ENCODE measurements at regions of chr2 and their contacts with region 1.

Region 1: DNA sequence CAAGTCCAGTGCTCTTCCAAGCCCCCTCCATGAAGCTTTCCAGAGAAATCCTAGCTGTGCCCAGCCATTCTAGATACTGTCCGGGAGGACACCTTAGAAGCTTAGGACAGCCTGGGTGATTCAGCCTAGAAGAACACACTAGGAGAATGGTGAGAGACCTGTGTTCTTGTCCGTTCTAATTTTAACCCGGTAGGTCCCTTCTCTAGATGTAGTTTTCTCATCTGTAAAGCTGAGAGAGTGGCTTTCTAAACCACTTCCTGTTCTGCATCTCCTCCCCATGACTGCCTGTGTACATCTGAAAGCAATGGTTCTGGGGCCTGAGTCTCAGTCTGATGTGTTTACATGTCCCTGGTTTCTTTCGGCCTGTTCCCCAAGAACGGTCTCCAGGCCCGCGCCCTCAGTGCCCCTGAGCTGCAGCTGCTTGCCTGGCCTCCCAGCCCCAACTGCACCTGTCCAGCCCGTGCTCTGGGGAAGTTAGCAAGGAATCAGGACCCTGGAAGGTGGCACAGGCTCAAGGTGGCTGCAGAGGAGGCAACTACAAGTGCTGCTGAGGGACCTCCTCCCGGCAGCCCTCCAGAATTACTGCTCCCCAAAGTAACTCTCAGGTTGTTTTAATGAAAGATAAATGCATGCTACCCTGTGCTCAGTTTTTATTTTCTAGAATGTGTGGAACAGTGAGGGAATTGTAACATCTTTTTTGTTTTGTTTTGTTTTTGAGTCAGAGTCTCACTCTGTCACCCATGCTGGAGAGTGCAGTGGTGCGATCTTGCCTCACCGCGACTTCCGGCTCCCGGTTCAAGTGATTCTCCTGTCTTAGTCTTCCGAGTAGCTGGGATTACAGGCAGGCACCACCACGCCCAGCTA is 105.9 kb downstream of the LBH start:
- DNase-seq: peak; percentile 49
- ATAC-seq: peak; percentile 85
- H3K4me3 Mint-ChIP-seq: peak overlapping the region; percentile 76
- H3K27ac Mint-ChIP-seq: peak overlapping the region; percentile 98
- H3K4me1 Mint-ChIP-seq: peaks cover 95% of the 10 kb centered on the region
- H3K27me3 Mint-ChIP-seq: no peaks in the 10 kb centered on the region
- CTCF ChIP-seq: no peak

Region 2: GRCh38 chr2:30208452-30208851 is 128.8 kb before region 1 on chr2:
- CTCF ChIA-PET with region 1: interaction called, 36 read pairs
- POLR2A ChIA-PET with region 1: interaction called, 4 read pairs
- intact Hi-C with region 1: loop called (anchors 1 kb)
- DNase-seq: no peak
- ATAC-seq: peak; percentile 62
- H3K4me3 Mint-ChIP-seq: no peak overlapping the region
- H3K27ac Mint-ChIP-seq: peak overlapping the region; percentile 20
- H3K4me1 Mint-ChIP-seq: peaks cover 18% of the 10 kb centered on the region
- H3K27me3 Mint-ChIP-seq: no peaks in the 10 kb centered on the region
- CTCF ChIP-seq: peak; percentile 82

Region 3: DNA sequence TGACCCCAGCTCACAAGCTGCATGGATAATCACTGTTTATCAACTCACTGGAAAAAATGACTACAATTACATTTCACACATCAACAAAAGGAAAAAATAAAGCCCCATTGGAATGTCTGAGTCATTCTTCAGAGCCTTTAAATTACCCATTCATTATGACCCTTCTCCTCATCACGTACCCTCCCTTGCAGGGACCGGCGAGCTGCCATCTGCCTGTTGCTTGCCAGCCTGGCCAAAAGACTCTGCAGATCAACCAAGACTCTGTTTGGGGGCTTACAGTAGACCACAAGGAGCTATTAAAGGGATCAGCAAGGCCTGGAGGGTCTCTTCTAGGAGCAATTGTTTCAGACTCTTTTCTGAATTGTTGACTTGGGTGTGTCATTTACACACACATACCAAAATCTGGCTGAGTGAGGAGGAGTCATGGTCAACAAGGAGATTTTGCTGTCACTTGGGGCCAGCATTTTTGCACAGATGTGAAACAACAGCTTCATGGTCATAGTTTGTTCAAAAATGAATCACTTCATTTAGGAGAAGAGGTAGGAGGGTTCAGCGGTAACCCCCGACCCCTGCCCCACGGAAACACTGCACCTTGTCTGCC is 63.8 kb before region 1 on chr2:
- CTCF ChIA-PET with region 1: interaction called, 6 read pairs
- POLR2A ChIA-PET with region 1: interaction called, 5 read pairs
- intact Hi-C with region 1: loop called (anchors 1 kb)
- DNase-seq: no peak
- ATAC-seq: no peak
- H3K4me3 Mint-ChIP-seq: no peak overlapping the region
- H3K27ac Mint-ChIP-seq: peak overlapping the region; percentile 72
- H3K4me1 Mint-ChIP-seq: peaks cover 93% of the 10 kb centered on the region
- H3K27me3 Mint-ChIP-seq: no peaks in the 10 kb centered on the region
- CTCF ChIP-seq: no peak

Region 4: GRCh38 chr2:30293303-30293921 is 43.8 kb before region 1 on chr2:
- CTCF ChIA-PET with region 1: interaction called, 13 read pairs
- POLR2A ChIA-PET with region 1: interaction called, 46 read pairs
- intact Hi-C with region 1: loop called (anchors 1 kb)
- DNase-seq: peak; percentile 42
- ATAC-seq: peak; percentile 81
- H3K4me3 Mint-ChIP-seq: peak overlapping the region; percentile 58
- H3K27ac Mint-ChIP-seq: peak overlapping the region; percentile 95
- H3K4me1 Mint-ChIP-seq: peaks cover 74% of the 10 kb centered on the region
- H3K27me3 Mint-ChIP-seq: no peaks in the 10 kb centered on the region
- CTCF ChIP-seq: no peak

Region 5: GRCh38 chr2:30385327-30385726 is 48.1 kb after region 1 on chr2:
- CTCF ChIA-PET with region 1: no interaction called
- POLR2A ChIA-PET with region 1: no interaction called
- intact Hi-C with region 1: no loop called
- DNase-seq: no peak
- ATAC-seq: no peak
- H3K4me3 Mint-ChIP-seq: no peak overlapping the region
- H3K27ac Mint-ChIP-seq: no peak overlapping the region
- H3K4me1 Mint-ChIP-seq: peaks cover 13% of the 10 kb centered on the region
- H3K27me3 Mint-ChIP-seq: peaks cover 5% of the 10 kb centered on the region
- CTCF ChIP-seq: no peak

Region 6: GRCh38 chr2:30398084-30398873 is 61.1 kb after region 1 on chr2:
- CTCF ChIA-PET with region 1: no interaction called
- POLR2A ChIA-PET with region 1: no interaction called
- intact Hi-C with region 1: no loop called
- DNase-seq: no peak
- ATAC-seq: no peak
- H3K4me3 Mint-ChIP-seq: no peak overlapping the region
- H3K27ac Mint-ChIP-seq: no peak overlapping the region
- H3K4me1 Mint-ChIP-seq: no peaks in the 10 kb centered on the region
- H3K27me3 Mint-ChIP-seq: no peaks in the 10 kb centered on the region
- CTCF ChIP-seq: no peak

Region 7: GRCh38 chr2:30421604-30422443 is 84.6 kb after region 1 on chr2:
- CTCF ChIA-PET with region 1: interaction called, 6 read pairs
- POLR2A ChIA-PET with region 1: interaction called, 11 read pairs
- intact Hi-C with region 1: loop called (anchors 1 kb)
- DNase-seq: no peak
- ATAC-seq: peak; percentile 60
- H3K4me3 Mint-ChIP-seq: peak overlapping the region; percentile 39
- H3K27ac Mint-ChIP-seq: peak overlapping the region; percentile 82
- H3K4me1 Mint-ChIP-seq: peaks cover 42% of the 10 kb centered on the region
- H3K27me3 Mint-ChIP-seq: no peaks in the 10 kb centered on the region
- CTCF ChIP-seq: no peak

Region 8: DNA sequence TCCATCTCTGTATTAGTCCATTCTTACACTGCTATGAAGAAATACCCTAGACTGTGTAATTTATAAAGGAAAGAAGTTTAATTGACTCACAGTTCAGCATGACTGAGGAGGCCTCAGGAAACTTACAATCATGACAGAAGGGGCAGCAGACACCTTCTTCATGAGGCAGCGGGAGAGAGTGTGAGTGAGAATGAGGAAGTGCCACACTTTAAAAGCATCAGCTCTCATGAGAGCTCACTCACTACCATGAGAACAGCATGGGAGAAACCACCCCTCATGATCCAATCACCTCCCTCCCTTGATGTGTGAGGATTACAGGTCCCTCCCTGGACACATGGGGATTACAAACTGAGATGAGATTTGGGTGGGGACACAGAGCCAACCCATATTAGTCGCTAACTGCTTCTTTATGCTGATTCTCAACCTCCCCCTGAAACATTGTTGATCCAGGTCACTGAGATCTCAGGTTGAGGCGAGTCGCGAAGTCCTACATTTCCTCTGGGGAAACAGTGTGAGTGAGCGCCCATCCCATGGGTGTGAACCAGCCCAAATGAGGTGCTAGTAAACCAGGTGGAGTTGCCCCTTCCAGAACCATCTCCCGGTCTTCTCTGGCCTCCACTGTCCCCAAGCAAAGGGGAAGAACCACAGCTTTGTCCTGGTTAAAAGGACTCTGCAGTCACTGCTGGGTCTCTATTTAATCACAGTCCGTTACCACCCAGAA is 346.2 kb after region 1 on chr2:
- CTCF ChIA-PET with region 1: no interaction called
- POLR2A ChIA-PET with region 1: no interaction called
- intact Hi-C with region 1: loop called (anchors 2 kb)
- DNase-seq: no peak
- ATAC-seq: peak; percentile 95
- H3K4me3 Mint-ChIP-seq: no peak overlapping the region
- H3K27ac Mint-ChIP-seq: peak overlapping the region; percentile 77
- H3K4me1 Mint-ChIP-seq: peaks cover 10% of the 10 kb centered on the region
- H3K27me3 Mint-ChIP-seq: no peaks in the 10 kb centered on the region
- CTCF ChIP-seq: no peak

Region 9: DNA sequence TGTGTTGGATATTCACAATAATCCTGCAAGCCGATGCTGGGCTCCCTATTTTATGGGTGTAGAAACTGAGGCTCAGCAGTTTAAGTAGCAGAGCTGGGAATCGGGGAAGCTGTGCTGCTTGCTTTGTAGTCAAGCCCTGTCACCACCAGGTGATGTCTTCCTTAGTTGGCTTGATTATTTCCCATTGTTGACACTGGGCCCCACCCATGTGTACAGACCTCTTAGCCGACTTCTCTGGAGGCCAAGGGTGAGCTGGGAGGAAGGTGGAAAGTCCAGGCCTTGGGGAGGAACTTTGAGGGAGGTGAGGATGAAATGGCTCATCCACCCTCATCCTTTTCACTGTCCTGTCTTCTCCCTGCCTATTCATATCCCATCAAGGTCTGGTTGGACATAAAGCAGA is 410.0 kb after region 1 on chr2:
- CTCF ChIA-PET with region 1: no interaction called
- POLR2A ChIA-PET with region 1: no interaction called
- intact Hi-C with region 1: no loop called
- DNase-seq: no peak
- ATAC-seq: no peak
- H3K4me3 Mint-ChIP-seq: no peak overlapping the region
- H3K27ac Mint-ChIP-seq: no peak overlapping the region
- H3K4me1 Mint-ChIP-seq: no peaks in the 10 kb centered on the region
- H3K27me3 Mint-ChIP-seq: peaks cover 6% of the 10 kb centered on the region
- CTCF ChIP-seq: no peak

Measured in activated B cell treated with CpG ODN at 0.5 μM for 24 hours (primary cell).